Thyroid gland (tissue), 4 donors: ENCODE measurements at regions of chr17 and their contacts with region 1.

Region 1: DNA sequence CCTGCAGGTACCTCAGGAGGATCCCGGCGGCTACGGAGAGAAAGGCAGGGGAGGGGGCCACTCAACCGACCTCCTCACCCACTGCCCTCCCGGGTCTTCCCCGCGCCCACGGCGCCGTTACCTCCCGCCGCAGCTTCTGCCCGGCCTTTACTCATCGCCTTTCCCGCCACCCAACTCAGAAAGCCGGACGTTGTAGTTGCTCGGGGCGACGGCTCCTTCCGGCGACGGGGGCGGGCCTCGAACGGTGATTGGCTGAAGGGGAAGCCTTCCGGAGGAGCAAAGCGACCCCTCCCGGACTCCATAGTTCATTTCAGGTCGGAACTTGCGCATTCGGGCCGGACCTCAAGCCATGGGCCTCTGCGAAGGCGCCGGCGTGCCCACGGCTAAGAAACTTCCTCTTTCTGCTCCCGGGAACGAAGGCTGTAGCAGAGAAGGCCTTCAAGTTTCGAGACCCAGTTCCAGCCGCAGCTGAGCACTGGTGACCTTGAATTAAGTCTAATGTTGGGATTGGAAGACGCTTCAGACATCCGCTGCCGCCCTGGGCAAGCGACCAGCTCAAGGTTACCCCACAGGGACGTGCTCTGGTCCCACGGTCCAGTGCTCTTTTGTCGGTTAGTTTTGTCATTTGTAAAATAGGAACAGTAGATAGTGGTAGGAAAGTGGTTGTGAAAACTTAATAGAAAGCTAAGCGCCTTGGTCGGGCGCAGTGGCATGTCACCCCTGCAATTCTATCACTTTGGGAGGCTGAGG is at the start of gene PSMC3IP:
- DNase-seq: peak; percentile 95 to 96
- H3K4me3 ChIP-seq: peak within 1 kb of the TSS; percentile 25 to 49 (median 34)
- H3K27ac ChIP-seq: peak within 1 kb of the TSS; percentile 51 to 86 (median 86)
- H3K4me1 ChIP-seq: peaks cover 10 to 13% of the 10 kb centered on the region in 2 donors
- H3K27me3 ChIP-seq: no peaks in the 10 kb centered on the region
- CTCF ChIP-seq: peak in 2 of 6 experiments; percentile 31 to 45
- POLR2A ChIP-seq: peak in 1 of 2 donors; percentile 88
- total RNA-seq, gene PSMC3IP: 1.4 to 5.8 (median 4.5) TPM

Region 2: GRCh38 chr17:42677008-42677857 is 99.5 kb after region 1 on chr17:
- intact Hi-C with region 1: loop called (anchors 5 kb)
- DNase-seq: peak; percentile 100
- H3K4me3 ChIP-seq: peak overlapping the region; percentile 21 to 90 (median 42)
- H3K27ac ChIP-seq: peak overlapping the region; percentile 94 to 96 (median 94)
- H3K4me1 ChIP-seq: peaks cover 40 to 54% of the 10 kb centered on the region in 2 donors
- H3K27me3 ChIP-seq: no peaks in the 10 kb centered on the region
- CTCF ChIP-seq: no peak
- POLR2A ChIP-seq: no peak

Region 3: GRCh38 chr17:42760652-42761581 is 183.2 kb after region 1 on chr17 and contains the start of gene RAMP2:
- intact Hi-C with region 1: loop called (anchors 10 kb)
- DNase-seq: peak; percentile 25 to 30
- H3K4me3 ChIP-seq: peak within 1 kb of the TSS in 1 of 3 donors; percentile 54
- H3K27ac ChIP-seq: peak within 1 kb of the TSS; percentile 37 to 79 (median 67)
- H3K4me1 ChIP-seq: peaks cover 5 to 12% of the 10 kb centered on the region in 2 donors
- H3K27me3 ChIP-seq: no peaks in the 10 kb centered on the region
- CTCF ChIP-seq: no peak
- POLR2A ChIP-seq: no peak
- total RNA-seq, gene RAMP2: 18.6 to 55.3 (median 25.7) TPM